Activated CD8-positive, alpha-beta T cell treated with anti-CD3 and anti-CD28 coated beads for 36 hours (primary cell): ENCODE measurements at regions of chr2 and their contacts with region 1.

Region 1: GRCh38 chr2:203730076-203730729 is 23.8 kb downstream of the CD28 start:
- DNase-seq: no peak
- ATAC-seq: peak; percentile 63
- H3K4me3 Mint-ChIP-seq: peak overlapping the region; percentile 49
- H3K27ac Mint-ChIP-seq: peak overlapping the region; percentile 99
- H3K4me1 Mint-ChIP-seq: peaks cover 89% of the 10 kb centered on the region
- H3K27me3 Mint-ChIP-seq: no peaks in the 10 kb centered on the region
- CTCF ChIP-seq: no peak

Region 2: GRCh38 chr2:203718087-203718486 is 12.1 kb before region 1 on chr2:
- CTCF ChIA-PET with region 1: interaction called, 25 read pairs
- POLR2A ChIA-PET with region 1: interaction called, 184 read pairs
- intact Hi-C with region 1: no loop called
- DNase-seq: peak; percentile 90
- ATAC-seq: peak; percentile 80
- H3K4me3 Mint-ChIP-seq: peak overlapping the region; percentile 43
- H3K27ac Mint-ChIP-seq: peak overlapping the region; percentile 88
- H3K4me1 Mint-ChIP-seq: peaks cover 96% of the 10 kb centered on the region
- H3K27me3 Mint-ChIP-seq: no peaks in the 10 kb centered on the region
- CTCF ChIP-seq: no peak

Region 3: GRCh38 chr2:203751685-203752271 is 21.6 kb after region 1 on chr2:
- CTCF ChIA-PET with region 1: interaction called, 16 read pairs
- POLR2A ChIA-PET with region 1: interaction called, 17 read pairs
- intact Hi-C with region 1: no loop called
- DNase-seq: no peak
- ATAC-seq: no peak
- H3K4me3 Mint-ChIP-seq: no peak overlapping the region
- H3K27ac Mint-ChIP-seq: peak overlapping the region; percentile 66
- H3K4me1 Mint-ChIP-seq: peaks cover 49% of the 10 kb centered on the region
- H3K27me3 Mint-ChIP-seq: no peaks in the 10 kb centered on the region
- CTCF ChIP-seq: no peak

Region 4: GRCh38 chr2:203763938-203764664 is 33.9 kb after region 1 on chr2:
- CTCF ChIA-PET with region 1: no interaction called
- POLR2A ChIA-PET with region 1: interaction called, 11 read pairs
- intact Hi-C with region 1: no loop called
- DNase-seq: no peak
- ATAC-seq: peak; percentile 93
- H3K4me3 Mint-ChIP-seq: peak overlapping the region; percentile 16
- H3K27ac Mint-ChIP-seq: peak overlapping the region; percentile 93
- H3K4me1 Mint-ChIP-seq: peaks cover 68% of the 10 kb centered on the region
- H3K27me3 Mint-ChIP-seq: no peaks in the 10 kb centered on the region
- CTCF ChIP-seq: no peak

Region 5: DNA sequence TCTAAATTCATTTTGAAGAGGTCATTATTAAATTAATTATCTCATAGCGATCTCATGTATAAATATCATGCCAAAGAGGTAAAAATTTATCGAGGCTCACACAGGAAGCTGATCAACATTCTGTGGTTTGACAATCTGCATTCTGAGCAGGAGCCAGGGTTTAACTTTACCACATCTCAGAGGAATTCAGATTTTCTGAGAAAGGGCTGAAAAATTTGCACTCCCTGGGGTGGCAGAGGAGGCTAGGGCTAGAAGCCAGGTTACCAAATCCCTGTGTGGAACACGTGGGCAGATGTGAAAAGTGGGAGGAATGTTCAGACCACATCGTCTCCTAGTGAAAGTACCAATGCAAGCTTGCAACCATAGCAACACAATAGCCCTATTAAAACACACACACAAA is 73.9 kb after region 1 on chr2:
- CTCF ChIA-PET with region 1: interaction called, 8 read pairs
- POLR2A ChIA-PET with region 1: interaction called, 12 read pairs
- intact Hi-C with region 1: no loop called
- DNase-seq: peak; percentile 72
- ATAC-seq: peak; percentile 47
- H3K4me3 Mint-ChIP-seq: no peak overlapping the region
- H3K27ac Mint-ChIP-seq: peak overlapping the region; percentile 88
- H3K4me1 Mint-ChIP-seq: peaks cover 87% of the 10 kb centered on the region
- H3K27me3 Mint-ChIP-seq: no peaks in the 10 kb centered on the region
- CTCF ChIP-seq: no peak